ENCODE measurements at regions of chr9 and their contacts with region 1.

Region 1: GRCh38 chr9:121201738-121202533 is at the start of gene RAB14:
- DNase-seq: peak; percentile 100
- H3K4me3 Mint-ChIP-seq: peak within 1 kb of the TSS; percentile 92
- H3K27ac Mint-ChIP-seq: peak within 1 kb of the TSS; percentile 92
- H3K4me1 Mint-ChIP-seq: peaks cover 59% of the 10 kb centered on the region
- H3K27me3 Mint-ChIP-seq: no peaks in the 10 kb centered on the region
- total RNA-seq, gene RAB14: 65.8 to 68.1 TPM

Region 2: DNA sequence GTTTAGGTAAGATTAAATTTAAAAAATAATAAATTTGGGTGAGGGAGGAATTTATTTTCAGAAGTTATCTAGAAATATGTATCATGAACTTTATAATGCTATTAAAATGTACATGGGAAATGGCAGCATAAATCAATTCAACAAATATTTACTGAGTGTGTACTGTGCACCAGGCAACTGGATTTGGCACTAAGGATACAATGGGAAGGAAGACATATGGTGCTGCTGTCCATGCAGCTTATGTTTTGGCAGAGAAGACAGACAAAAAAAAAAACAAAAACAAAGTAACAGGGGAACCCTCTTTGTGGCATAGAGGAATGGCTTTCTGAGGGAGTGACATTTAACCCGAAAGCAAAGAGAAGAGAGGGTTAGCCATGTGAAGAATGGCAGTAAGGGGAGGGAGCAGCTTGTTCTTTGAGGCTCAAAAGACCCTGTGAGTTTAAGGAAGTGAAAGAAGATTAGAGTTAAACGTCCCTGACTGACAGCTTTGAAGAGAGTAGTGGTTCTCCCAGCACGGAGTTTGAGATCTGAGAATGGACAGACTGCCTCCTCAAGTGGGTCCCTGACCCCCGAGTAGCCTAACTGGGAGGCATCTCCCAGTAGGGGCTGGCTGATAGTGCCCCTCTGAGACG is 103.3 kb before region 1 on chr9:
- CTCF ChIA-PET with region 1: no interaction called
- POLR2A ChIA-PET with region 1: no interaction called
- DNase-seq: no peak
- H3K4me3 Mint-ChIP-seq: no peak overlapping the region
- H3K27ac Mint-ChIP-seq: no peak overlapping the region
- H3K4me1 Mint-ChIP-seq: no peaks in the 10 kb centered on the region
- H3K27me3 Mint-ChIP-seq: no peaks in the 10 kb centered on the region

Region 3: DNA sequence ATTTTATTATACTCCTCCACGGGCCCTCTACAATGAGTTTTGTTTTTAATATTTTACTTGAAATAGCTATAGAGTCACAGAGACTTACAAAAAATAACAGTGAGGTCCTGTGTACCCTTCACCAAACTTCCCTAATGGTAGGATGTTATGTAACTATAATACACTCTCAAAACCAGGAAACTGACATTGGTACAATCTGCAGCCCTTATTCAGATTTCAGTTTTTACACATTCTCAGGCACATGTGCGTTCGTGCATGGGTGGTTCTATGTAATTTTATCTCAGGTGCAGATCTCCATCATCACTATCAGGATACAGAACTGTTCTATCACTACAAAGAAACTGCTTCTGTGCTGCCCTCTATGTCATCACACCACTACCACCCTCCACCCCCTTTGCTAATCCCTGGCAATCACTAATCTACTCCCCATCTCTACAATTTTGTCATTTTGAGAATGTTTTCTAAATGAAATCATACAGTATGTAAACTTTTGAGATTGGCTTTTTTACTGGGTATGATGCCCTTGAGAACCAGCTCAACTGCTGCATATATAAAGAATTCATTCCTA is 16.7 kb before region 1 on chr9:
- CTCF ChIA-PET with region 1: interaction called, 13 read pairs
- POLR2A ChIA-PET with region 1: interaction called, 12 read pairs
- DNase-seq: no peak
- H3K4me3 Mint-ChIP-seq: no peak overlapping the region
- H3K27ac Mint-ChIP-seq: peak overlapping the region; percentile 2
- H3K4me1 Mint-ChIP-seq: peaks cover 46% of the 10 kb centered on the region
- H3K27me3 Mint-ChIP-seq: no peaks in the 10 kb centered on the region